Activated B cell treated with CpG ODN at 0.5 μM for 24 hours (primary cell): ENCODE measurements at regions of chr17 and their contacts with region 1.

Region 1: GRCh38 chr17:76997981-76998531 is 129.9 kb downstream of the MGAT5B start:
- DNase-seq: peak; percentile 40
- ATAC-seq: peak; percentile 90
- H3K4me3 Mint-ChIP-seq: peak overlapping the region; percentile 68
- H3K27ac Mint-ChIP-seq: peak overlapping the region; percentile 74
- H3K4me1 Mint-ChIP-seq: peaks cover 40% of the 10 kb centered on the region
- H3K27me3 Mint-ChIP-seq: peaks cover 15% of the 10 kb centered on the region
- CTCF ChIP-seq: no peak

Region 2: DNA sequence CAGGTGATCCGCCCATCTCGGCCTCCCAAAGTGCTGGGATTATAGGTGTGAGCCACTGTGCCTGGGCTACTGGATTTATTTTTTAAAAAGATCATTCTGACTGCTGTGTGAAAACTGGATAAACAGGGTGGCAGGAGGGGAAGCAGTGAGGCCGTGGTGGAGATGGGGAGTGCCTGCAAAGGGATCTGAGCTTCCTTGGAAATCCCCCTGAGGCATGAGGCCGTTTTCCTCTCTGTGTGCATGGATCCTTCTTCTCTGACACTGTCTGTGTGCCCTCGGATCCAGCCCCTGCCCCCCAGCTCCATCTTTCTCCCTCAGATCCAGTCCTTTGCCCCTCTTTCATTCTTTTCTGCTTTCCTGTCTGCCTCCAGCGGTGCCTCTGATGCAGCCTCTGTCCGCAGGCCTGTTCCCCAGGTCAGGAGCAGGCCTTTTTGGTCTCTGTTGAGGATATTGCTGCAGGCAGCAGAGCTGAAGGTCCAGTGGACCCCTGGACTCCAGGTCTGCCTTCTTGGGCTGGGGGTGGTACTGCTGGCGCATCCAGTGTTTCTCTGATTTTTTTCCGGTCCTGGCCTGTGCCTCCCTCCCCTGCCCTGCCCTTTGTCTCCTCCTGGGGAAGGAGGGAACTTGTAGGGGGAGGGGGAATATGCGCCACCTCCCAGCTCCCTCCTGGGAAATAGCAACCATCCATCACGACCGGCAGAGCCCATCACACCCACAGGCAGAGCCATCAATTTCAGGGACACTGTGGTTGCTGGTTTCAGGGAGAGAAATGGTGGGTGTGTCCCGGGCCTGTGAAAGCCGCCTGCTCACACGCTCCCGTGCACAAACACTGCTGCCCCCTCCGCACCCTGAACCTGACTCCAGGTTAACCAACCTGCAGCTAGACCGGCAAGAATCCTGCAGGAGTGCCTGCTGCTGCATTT is 112.8 kb before region 1 on chr17:
- CTCF ChIA-PET with region 1: no interaction called
- POLR2A ChIA-PET with region 1: no interaction called
- intact Hi-C with region 1: no loop called
- DNase-seq: no peak
- ATAC-seq: no peak
- H3K4me3 Mint-ChIP-seq: no peak overlapping the region
- H3K27ac Mint-ChIP-seq: no peak overlapping the region
- H3K4me1 Mint-ChIP-seq: no peaks in the 10 kb centered on the region
- H3K27me3 Mint-ChIP-seq: peaks cover 11% of the 10 kb centered on the region
- CTCF ChIP-seq: no peak

Region 3: GRCh38 chr17:76957678-76958464 is 40.2 kb before region 1 on chr17:
- CTCF ChIA-PET with region 1: no interaction called
- POLR2A ChIA-PET with region 1: interaction called, 12 read pairs
- intact Hi-C with region 1: loop called (anchors 1 kb)
- DNase-seq: peak; percentile 42
- ATAC-seq: peak; percentile 91
- H3K4me3 Mint-ChIP-seq: peak overlapping the region; percentile 81
- H3K27ac Mint-ChIP-seq: peak overlapping the region; percentile 66
- H3K4me1 Mint-ChIP-seq: peaks cover 31% of the 10 kb centered on the region
- H3K27me3 Mint-ChIP-seq: peaks cover 2% of the 10 kb centered on the region
- CTCF ChIP-seq: no peak

Region 4: GRCh38 chr17:77429919-77430752 is 432.1 kb after region 1 on chr17:
- CTCF ChIA-PET with region 1: no interaction called
- POLR2A ChIA-PET with region 1: no interaction called
- intact Hi-C with region 1: no loop called
- DNase-seq: peak; percentile 67
- ATAC-seq: peak; percentile 37
- H3K4me3 Mint-ChIP-seq: no peak overlapping the region
- H3K27ac Mint-ChIP-seq: peak overlapping the region; percentile 63
- H3K4me1 Mint-ChIP-seq: peaks cover 96% of the 10 kb centered on the region
- H3K27me3 Mint-ChIP-seq: no peaks in the 10 kb centered on the region
- CTCF ChIP-seq: no peak